ENCODE measurements at regions of chr5 and their contacts with region 1.

Region 1: DNA sequence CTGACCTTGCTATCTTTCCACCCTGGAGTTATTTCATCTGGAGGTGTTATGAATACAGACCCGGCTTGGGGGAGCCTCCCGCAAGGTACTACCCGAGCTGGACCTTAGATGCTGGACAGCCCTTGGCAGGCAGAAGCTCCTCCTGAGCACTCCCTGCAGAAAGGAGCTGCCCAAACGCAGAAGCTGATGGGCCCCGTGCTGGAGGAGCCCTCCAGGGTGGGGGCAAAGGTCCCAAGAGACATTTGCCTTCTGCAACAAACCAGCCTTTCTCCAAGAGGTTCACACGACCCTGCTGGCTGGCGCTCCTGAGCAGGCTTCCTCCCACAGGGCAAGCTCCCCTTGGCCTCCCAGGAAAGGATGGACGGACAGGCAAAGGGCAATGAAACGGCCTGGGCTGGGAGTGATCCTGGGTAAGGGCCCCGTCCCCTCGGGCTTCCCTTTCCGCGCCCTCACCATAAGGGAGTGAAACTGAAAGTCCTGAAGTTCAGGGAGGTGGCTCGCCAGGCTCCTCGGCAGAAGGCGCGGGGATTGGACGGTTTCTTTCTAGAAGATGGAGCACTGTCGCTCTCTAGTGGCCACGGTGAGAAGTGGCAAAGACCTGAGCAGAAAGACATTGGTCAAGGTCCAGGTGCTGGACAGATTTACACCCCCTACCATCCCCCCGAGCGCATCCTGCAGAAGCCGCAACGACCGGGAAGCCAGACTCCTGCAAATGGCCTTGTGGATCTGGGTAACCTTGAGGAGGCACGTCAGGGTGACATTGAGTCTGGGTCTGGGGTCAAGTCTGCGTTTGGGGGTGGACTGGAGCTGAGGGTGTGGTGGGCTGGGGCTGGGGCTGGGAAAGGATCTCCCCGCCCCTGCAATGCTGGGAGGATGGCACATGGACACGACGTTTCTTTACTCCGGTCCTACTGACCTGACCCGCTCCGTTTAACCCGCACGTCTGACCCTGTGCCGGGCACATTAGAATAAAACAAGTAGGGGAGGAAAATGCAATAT is 56.4 kb downstream of the NEURL1B start:
- DNase-seq: peak; percentile 92
- ATAC-seq: peak; percentile 74

Region 2: GRCh38 chr5:172347496-172348052 is 349.8 kb before region 1 on chr5:
- intact Hi-C with region 1: no loop called
- DNase-seq: no peak
- ATAC-seq: peak; percentile 25

Region 3: DNA sequence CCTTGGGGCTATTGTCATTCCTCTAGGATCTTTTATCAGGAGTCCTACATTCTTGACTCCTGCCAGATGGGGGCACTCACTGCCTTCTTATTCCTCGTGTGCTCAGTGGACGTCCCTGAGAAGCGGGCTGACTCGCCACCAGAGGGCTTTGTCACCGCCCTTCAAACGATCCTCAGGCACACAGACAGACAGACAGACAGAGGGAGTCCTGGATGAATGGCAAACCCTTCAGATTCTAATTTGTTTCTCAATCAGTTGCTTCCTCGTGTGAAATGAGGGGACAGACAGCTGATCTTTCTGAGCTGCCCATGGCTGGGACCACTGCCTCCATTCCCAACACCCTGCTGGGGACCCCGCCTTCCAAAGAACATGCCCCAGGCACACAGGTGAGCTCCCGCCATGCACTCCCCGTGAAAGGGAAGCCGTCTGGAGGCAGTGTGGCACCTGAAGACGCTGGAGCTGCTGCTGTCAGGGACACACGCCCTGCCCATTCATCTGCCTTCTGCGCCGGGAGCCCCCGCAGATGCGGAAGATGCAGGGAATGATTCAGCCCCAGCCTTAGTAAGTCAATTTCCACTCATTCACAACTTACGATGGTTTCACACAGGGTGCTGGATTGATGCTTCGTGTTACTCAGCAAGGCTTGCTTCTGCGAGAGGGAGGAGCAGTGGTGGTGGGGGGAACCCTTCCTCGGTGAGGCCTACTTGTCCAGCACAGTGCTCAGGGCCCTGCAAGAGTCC is 218.2 kb before region 1 on chr5:
- intact Hi-C with region 1: loop called (anchors 1 kb)
- DNase-seq: peak; percentile 91
- ATAC-seq: peak; percentile 95

Region 4: GRCh38 chr5:172583931-172584511 is 113.4 kb before region 1 on chr5:
- intact Hi-C with region 1: loop called (anchors 10 kb)
- DNase-seq: peak; percentile 79
- ATAC-seq: peak; percentile 73

Measured in Right ventricle myocardium superior (tissue), 1 donor.